ENCODE measurements at regions of chr10 and their contacts with region 1.

Region 1: DNA sequence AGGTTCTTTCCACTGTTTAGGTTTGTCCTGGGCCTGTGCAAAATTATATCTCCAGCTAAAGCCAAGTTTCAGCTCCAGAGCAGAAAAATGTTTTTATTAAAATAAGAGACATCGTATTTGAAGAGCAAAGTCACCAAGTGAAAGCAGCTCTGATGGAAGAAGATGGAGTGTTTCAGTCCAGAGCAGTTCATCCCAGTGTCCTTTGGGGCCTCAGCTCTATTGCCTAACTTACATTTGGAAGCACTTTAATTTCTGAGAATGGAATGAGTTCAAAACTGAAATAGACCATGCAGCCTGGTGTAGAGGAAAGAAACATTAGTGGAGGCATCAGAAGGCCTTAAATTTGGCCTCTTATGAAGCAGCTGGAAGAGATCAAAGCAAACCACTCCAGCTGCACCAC is 545.2 kb downstream of the SORCS1 start:
- DNase-seq: no peak
- H3K4me3 Mint-ChIP-seq: no peak overlapping the region
- H3K27ac Mint-ChIP-seq: no peak overlapping the region
- H3K4me1 Mint-ChIP-seq: no peaks in the 10 kb centered on the region
- H3K27me3 Mint-ChIP-seq: no peaks in the 10 kb centered on the region
- CTCF ChIP-seq: no peak

Region 2: GRCh38 chr10:106401161-106401560 is 218.2 kb before region 1 on chr10:
- CTCF ChIA-PET with region 1: no interaction called
- POLR2A ChIA-PET with region 1: no interaction called
- intact Hi-C with region 1: loop called (anchors 1 kb)
- DNase-seq: peak; percentile 59
- H3K4me3 Mint-ChIP-seq: no peak overlapping the region
- H3K27ac Mint-ChIP-seq: no peak overlapping the region
- H3K4me1 Mint-ChIP-seq: peaks cover 11% of the 10 kb centered on the region
- H3K27me3 Mint-ChIP-seq: no peaks in the 10 kb centered on the region
- CTCF ChIP-seq: peak; percentile 59

Region 3: DNA sequence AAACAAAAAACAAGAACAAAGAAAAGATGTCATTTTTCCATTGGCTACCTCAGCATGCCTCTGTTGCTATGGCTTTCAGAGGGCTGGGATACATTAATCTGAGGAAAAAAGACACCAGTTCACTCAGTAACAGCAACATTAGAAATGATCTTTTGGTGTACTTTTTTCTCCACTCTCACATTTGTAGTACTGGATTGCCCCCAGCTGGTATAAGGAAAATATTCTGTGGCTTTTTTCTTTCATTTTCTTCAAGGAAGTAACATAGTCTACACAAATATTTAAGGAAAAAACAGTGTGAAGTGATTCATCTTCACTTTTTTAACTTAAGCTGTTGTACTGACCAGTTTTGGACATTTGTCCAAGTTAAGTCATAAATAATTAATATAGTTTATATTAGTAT is 62.8 kb after region 1 on chr10:
- CTCF ChIA-PET with region 1: interaction called, 125 read pairs
- POLR2A ChIA-PET with region 1: no interaction called
- intact Hi-C with region 1: loop called (anchors 1 kb)
- DNase-seq: peak; percentile 31
- H3K4me3 Mint-ChIP-seq: no peak overlapping the region
- H3K27ac Mint-ChIP-seq: no peak overlapping the region
- H3K4me1 Mint-ChIP-seq: peaks cover 8% of the 10 kb centered on the region
- H3K27me3 Mint-ChIP-seq: no peaks in the 10 kb centered on the region
- CTCF ChIP-seq: peak; percentile 32

Region 4: DNA sequence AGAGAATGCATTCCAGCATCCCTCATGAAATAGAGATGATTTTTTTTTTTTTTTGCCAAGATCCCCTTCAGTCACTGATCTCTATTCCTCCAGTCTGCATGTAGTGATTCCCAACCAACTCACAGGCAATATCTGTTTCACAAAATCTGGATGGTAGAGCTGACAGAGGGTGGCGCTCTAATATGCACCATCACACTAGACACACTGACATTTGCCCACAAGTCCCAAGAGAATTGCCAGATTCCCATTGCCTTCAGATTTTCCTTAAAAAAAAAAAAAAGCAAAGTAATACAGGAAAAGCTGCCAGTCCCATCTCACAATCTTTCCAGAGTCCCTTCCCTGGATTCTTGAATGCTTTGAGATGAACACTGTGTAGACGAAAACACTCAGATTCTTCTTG is 244.2 kb after region 1 on chr10:
- CTCF ChIA-PET with region 1: no interaction called
- POLR2A ChIA-PET with region 1: no interaction called
- intact Hi-C with region 1: no loop called
- DNase-seq: no peak
- H3K4me3 Mint-ChIP-seq: no peak overlapping the region
- H3K27ac Mint-ChIP-seq: no peak overlapping the region
- H3K4me1 Mint-ChIP-seq: no peaks in the 10 kb centered on the region
- H3K27me3 Mint-ChIP-seq: no peaks in the 10 kb centered on the region
- CTCF ChIP-seq: no peak

Measured in MCF 10A (cell line).